Dorsolateral prefrontal cortex (tissue), 120 donors: ENCODE measurements at regions of chr22 and their contacts with region 1.

Region 1: DNA sequence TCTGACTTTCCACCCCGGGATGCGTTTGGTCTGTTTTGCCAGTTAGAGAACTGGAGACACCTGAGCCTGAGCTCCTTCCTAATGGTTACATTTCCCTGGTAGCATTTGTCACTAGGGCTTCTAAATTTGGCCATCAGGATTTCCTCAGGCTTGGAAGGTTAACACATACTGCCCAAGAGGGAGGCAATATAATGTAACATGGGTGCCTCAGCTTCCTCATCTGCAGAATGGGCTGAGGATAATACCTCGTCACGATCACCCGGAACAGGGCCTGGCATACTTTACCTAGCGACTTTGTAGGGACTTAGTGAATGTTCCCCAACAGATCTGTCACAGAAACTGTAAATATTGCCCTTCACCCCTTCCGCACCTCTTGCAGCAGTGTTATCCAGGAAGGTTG is 11.3 kb downstream of the IL17RA start:
- DNase-seq: no peak
- H3K4me3 ChIP-seq: no peak overlapping the region
- H3K27ac ChIP-seq: no peak overlapping the region
- H3K27me3 ChIP-seq: no peaks in the 10 kb centered on the region
- CTCF ChIP-seq: no peak

Region 2: DNA sequence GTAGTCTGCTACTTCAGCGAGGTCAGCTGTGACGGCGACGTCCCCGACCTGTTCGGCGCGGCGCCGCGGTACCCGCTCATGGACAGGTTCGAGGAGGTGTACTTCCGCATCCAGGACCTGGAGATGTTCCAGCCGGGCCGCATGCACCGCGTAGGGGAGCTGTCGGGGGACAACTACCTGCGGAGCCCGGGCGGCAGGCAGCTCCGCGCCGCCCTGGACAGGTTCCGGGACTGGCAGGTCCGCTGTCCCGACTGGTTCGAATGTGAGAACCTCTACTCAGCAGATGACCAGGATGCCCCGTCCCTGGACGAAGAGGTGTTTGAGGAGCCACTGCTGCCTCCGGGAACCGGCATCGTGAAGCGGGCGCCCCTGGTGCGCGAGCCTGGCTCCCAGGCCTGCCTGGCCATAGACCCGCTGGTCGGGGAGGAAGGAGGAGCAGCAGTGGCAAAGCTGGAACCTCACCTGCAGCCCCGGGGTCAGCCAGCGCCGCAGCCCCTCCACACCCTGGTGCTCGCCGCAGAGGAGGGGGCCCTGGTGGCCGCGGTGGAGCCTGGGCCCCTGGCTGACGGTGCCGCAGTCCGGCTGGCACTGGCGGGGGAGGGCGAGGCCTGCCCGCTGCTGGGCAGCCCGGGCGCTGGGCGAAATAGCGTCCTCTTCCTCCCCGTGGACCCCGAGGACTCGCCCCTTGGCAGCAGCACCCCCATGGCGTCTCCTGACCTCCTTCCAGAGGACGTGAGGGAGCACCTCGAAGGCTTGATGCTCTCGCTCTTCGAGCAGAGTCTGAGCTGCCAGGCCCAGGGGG is 12.8 kb after region 1 on chr22:
- intact Hi-C with region 1: loop called in 1 of 2 experiments (anchors 1 kb)
- DNase-seq: no peak
- H3K4me3 ChIP-seq: no peak overlapping the region
- H3K27ac ChIP-seq: no peak overlapping the region
- H3K27me3 ChIP-seq: no peaks in the 10 kb centered on the region
- CTCF ChIP-seq: no peak

Region 3: GRCh38 chr22:17188237-17188636 is 92.2 kb after region 1 on chr22:
- intact Hi-C with region 1: no loop called
- DNase-seq: no peak
- H3K4me3 ChIP-seq: no peak overlapping the region
- H3K27ac ChIP-seq: no peak overlapping the region
- H3K27me3 ChIP-seq: no peaks in the 10 kb centered on the region
- CTCF ChIP-seq: no peak